HEK293T (cell line): ENCODE measurements at regions of chr10 and their contacts with region 1.

Region 1: DNA sequence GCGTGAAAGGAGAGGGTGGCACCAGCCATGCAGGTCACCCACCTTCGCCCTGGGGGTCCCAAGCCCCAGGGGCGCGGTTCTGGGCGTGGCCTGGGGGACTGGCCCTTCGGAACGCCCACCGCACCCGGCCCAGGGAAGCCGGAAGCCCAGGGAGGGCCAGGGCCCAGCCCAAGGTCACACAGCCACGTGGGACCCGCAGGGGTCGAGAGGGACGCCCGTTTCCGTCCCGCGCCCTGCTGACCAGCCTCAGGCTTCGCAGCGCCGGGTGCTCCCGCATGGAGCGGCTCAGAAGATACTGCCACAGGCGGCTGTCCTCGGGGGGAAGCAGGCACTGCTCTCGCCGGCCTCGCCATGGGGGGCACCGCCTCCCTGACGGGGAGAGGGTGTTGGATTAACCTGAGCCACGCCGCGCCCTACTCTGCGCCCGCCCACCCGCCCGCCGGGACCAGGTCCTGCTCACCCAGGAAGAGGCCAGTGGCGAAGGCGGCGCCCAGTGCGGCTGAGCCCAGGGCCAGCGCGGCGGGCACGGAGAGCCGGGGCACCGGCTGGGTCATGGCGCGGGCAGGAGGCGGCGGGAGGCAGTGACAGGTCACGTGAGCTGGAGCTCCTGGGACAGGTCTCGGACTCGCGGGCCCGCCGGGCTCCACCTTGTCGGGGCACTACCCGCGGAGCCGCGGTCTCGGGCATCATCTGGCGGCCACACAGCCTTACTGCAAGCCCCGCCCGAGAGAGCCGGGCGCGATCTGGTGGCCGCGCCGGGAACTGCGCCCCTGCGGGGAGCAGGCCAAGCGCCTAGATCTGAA is at the start of gene COMTD1:
- DNase-seq: peak; percentile 94

Region 2: DNA sequence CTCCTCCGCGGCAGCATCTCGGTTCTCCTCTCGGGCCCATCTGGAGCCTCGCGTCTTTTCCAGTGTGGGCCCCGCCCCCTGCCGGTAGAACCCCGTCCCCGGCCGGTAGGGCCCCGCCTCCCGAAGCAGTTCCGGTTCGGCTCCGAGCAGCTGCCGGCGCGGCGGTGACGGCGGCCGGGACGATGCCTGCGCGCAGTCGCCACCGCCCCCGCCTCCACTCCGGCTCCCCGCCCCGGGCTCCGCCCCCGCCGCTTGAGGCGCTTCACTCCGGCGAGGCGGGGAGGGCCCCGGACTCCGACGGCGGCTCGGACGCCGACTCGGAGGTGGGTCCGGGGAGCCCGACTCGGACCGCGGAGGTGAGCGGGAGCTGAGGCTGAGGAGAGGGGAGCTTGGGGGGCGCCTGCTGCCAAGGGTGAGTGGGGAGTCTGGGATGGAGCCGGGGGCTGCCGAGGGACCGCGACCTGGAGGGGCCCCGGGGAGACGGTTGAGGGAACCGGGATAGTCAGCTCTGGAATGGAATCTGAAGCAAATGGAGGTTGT is 124.1 kb before region 1 on chr10 and contains the start of gene SAMD8:
- CTCF ChIA-PET with region 1: interaction called, 6 read pairs
- POLR2A ChIA-PET with region 1: interaction called, 16 read pairs
- DNase-seq: peak; percentile 98

Region 3: DNA sequence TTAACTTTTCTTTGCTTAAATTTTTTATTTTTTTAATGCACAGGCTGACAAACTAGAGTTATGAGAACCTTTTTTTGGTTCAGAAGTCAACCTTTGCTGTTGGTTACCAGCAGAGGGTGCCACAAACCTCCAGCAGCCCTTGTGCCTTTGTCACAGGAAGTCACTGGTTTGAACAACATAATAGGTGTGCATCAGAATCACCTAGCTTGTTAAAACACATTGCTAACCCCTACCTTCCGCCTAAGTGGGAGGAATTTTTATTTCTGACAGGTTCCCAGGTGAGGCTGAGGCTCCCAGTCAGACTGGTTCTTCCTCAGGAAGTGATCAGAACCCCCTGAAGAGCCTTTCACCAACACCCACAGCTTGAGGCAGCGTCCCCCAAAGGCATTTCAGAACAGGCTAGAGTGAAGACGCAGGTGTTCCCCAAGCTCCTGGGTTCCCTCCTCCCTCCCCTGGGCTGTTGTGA is 47.6 kb before region 1 on chr10:
- CTCF ChIA-PET with region 1: interaction called, 13 read pairs
- POLR2A ChIA-PET with region 1: interaction called, 4 read pairs
- DNase-seq: peak; percentile 69

Region 4: GRCh38 chr10:75210282-75211006 is 25.1 kb before region 1 on chr10 and contains the start of gene VDAC2:
- CTCF ChIA-PET with region 1: interaction called, 9 read pairs
- POLR2A ChIA-PET with region 1: interaction called, 48 read pairs
- DNase-seq: peak; percentile 94

Region 5: DNA sequence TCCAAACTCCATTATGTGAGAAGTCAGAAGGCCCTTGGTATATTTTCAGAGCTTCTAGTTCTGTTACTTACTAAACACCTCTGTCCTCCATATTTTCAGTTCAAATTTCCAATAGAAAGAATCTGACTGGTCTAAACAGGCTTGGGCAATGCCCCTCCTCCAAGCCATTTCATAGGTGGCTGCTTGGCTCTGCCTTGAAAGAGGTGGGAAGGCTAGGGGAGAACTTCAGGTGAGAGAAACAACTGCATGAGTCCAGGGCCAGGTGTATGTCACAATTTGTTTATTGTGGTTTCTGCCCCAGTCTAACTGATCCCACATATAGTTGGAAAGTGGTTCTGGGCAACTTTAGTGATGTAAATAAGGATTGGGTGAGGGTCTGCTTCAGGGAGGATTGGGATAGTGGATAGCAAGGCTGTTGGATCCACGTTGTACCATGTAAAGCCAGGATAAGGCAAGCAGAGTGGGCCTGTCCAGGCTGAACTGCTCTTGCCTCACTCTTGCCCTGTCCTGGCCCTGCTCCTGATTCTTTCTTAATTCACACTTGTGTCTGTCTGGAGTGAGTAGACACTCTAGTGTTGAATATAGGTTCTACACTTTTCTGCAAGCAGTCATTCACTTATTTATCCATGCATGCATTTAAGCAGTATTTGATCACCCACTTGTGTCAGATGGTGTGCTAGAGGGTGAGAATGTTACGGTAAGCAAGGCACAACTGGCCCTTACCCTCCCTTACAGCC is 67.6 kb after region 1 on chr10:
- CTCF ChIA-PET with region 1: no interaction called
- POLR2A ChIA-PET with region 1: no interaction called
- DNase-seq: no peak

Region 6: GRCh38 chr10:75395066-75395931 is 159.7 kb after region 1 on chr10:
- CTCF ChIA-PET with region 1: interaction called, 13 read pairs
- POLR2A ChIA-PET with region 1: interaction called, 3 read pairs
- DNase-seq: no peak